ENCODE measurements at regions of chr2 and their contacts with region 1.

Region 1: GRCh38 chr2:219177552-219178376 is at the start of gene RETREG2:
- DNase-seq: peak; percentile 61 to 96 (median 78)
- ATAC-seq: peak; percentile 55
- H3K4me3 ChIP-seq: peak within 1 kb of the TSS; percentile 71 to 82
- H3K4me3 Mint-ChIP-seq: peak within 1 kb of the TSS; percentile 91
- H3K27ac ChIP-seq: peak within 1 kb of the TSS; percentile 97 to 98
- H3K27ac Mint-ChIP-seq: peak within 1 kb of the TSS; percentile 99
- H3K4me1 ChIP-seq: peaks cover 75% of the 10 kb centered on the region
- H3K4me1 Mint-ChIP-seq: peaks cover 75% of the 10 kb centered on the region
- H3K27me3 ChIP-seq: no peaks in the 10 kb centered on the region
- H3K27me3 Mint-ChIP-seq: no peaks in the 10 kb centered on the region
- CTCF ChIP-seq: no peak
- total RNA-seq, gene RETREG2: 76.7 to 79.0 TPM

Region 2: DNA sequence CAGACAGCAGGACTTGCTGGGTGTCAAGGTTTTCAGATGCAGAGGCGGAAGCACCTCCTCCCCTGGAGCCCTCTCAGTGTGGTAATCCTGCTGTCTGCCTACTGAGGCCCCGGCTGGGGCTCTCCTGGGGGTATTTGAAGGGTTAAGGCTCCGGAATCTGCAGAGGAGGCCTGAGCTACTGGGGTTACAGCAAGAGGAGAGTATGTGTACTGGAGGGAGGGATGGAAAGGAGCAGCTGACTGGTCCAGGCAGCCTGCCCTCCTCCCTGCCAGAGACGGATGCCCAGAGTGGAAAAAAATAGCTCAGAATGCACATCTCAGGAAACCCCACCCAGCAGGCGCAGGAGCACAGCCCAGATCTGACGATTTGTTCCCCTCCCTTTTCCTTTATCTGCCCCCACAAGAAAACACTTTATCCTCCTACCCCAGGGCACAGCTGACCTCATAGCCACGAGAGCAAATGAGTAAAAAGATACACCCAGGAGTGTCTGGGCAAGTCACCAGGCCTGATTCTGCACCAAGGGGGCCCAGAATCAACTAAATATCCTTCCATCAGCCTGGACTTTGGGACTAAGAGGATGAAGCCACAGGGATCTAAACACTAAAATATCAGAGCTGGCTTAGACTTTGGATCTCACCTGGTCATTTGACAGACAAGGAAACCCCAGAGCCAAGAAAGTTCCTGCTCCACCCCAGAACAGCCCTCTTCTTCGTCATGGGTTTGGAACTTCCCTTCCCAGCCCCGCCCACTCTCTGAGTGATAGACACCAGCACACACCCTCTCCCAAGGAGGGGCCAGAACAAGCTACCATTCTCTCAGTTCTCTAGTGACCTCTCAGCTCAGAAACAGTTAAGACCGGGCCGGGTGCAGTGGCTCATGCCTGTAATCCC is 890.9 kb before region 1 on chr2:
- CTCF ChIA-PET with region 1: no interaction called
- POLR2A ChIA-PET with region 1: no interaction called
- intact Hi-C with region 1: loop called in 1 of 2 experiments (anchors 2 kb)
- DNase-seq: peak; percentile 56 to 97 (median 80)
- ATAC-seq: peak; percentile 62
- H3K4me3 ChIP-seq: peak overlapping the region; percentile 51 to 60
- H3K4me3 Mint-ChIP-seq: peak overlapping the region; percentile 90
- H3K27ac ChIP-seq: peak overlapping the region; percentile 87 to 99
- H3K27ac Mint-ChIP-seq: peak overlapping the region; percentile 100
- H3K4me1 ChIP-seq: peaks cover 93% of the 10 kb centered on the region
- H3K4me1 Mint-ChIP-seq: peaks cover 78% of the 10 kb centered on the region
- H3K27me3 ChIP-seq: no peaks in the 10 kb centered on the region
- H3K27me3 Mint-ChIP-seq: no peaks in the 10 kb centered on the region
- CTCF ChIP-seq: no peak

Region 3: DNA sequence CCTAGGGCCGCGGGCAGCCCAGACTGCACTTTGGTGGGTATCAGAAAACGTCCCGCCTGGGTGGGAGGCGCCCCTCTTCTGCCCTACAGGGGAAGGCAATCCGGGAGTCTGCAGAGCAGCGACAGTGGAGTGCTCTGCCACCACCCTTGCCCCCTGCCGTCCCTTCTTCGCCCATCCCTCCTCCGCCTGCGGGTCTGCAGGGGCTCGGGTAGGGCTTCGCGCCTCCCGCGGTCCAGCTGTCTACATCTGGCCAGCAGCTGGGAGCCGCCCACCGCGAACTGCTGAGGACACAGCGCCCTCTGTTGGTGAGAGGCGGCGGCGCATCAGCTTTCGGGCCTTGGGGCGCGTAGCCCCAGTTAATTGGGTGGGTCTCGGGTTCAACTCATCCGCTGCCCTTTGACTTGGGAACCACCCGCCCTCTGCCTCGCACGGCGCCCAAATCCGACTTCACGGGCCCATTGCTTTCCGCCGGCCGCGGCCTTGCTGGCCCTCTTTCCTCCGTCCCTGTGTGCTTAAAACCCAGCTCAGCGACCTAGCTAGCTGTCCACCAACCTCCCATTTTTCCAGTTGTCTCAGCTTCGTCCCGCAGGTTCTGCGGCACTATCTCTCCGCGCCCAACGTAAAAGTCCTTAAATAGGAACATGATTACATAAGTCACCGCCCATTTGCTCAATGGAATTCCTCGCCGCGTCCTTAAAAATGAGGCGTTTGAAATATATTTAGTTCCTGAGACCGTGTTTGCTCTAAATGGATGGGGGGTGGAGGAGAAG is 279.5 kb before region 1 on chr2:
- CTCF ChIA-PET with region 1: no interaction called
- POLR2A ChIA-PET with region 1: no interaction called
- intact Hi-C with region 1: loop called in 1 of 2 experiments (anchors 5 kb)
- DNase-seq: peak; percentile 60 to 90 (median 81)
- ATAC-seq: peak; percentile 10
- H3K4me3 ChIP-seq: peak overlapping the region in 1 of 2 experiments; percentile 57
- H3K4me3 Mint-ChIP-seq: peak overlapping the region; percentile 80
- H3K27ac ChIP-seq: no peak overlapping the region
- H3K27ac Mint-ChIP-seq: no peak overlapping the region
- H3K4me1 ChIP-seq: peaks cover 54% of the 10 kb centered on the region
- H3K4me1 Mint-ChIP-seq: peaks cover 45% of the 10 kb centered on the region
- H3K27me3 ChIP-seq: peaks cover 7 to 33% of the 10 kb centered on the region in 2 experiments
- H3K27me3 Mint-ChIP-seq: peaks cover 30% of the 10 kb centered on the region
- CTCF ChIP-seq: peak; percentile 99

Region 4: GRCh38 chr2:219218732-219219701 is 41.3 kb after region 1 on chr2 and contains the start of gene ABCB6:
- CTCF ChIA-PET with region 1: interaction called, 215 read pairs
- POLR2A ChIA-PET with region 1: interaction called, 18 read pairs
- intact Hi-C with region 1: no loop called
- DNase-seq: peak; percentile 59 to 92 (median 87)
- ATAC-seq: peak; percentile 91
- H3K4me3 ChIP-seq: peak within 1 kb of the TSS; percentile 50 to 87
- H3K4me3 Mint-ChIP-seq: peak within 1 kb of the TSS; percentile 82
- H3K27ac ChIP-seq: peak within 1 kb of the TSS; percentile 43 to 47
- H3K27ac Mint-ChIP-seq: peak within 1 kb of the TSS; percentile 72
- H3K4me1 ChIP-seq: peaks cover 23% of the 10 kb centered on the region
- H3K4me1 Mint-ChIP-seq: peaks cover 19% of the 10 kb centered on the region
- H3K27me3 ChIP-seq: no peaks in the 10 kb centered on the region
- H3K27me3 Mint-ChIP-seq: no peaks in the 10 kb centered on the region
- CTCF ChIP-seq: no peak
- total RNA-seq, gene ABCB6: 3.4 to 3.5 TPM

Region 5: GRCh38 chr2:219253753-219254590 is 76.2 kb after region 1 on chr2 and contains the start of gene TUBA4A:
- CTCF ChIA-PET with region 1: interaction called, 4 read pairs
- POLR2A ChIA-PET with region 1: interaction called, 20 read pairs
- intact Hi-C with region 1: loop called in 1 of 2 experiments (anchors 2 kb)
- DNase-seq: peak; percentile 82 to 95 (median 91)
- ATAC-seq: peak; percentile 74
- H3K4me3 ChIP-seq: peak within 1 kb of the TSS; percentile 98 to 100
- H3K4me3 Mint-ChIP-seq: peak within 1 kb of the TSS; percentile 87
- H3K27ac ChIP-seq: peak within 1 kb of the TSS; percentile 81 to 93
- H3K27ac Mint-ChIP-seq: peak within 1 kb of the TSS; percentile 96
- H3K4me1 ChIP-seq: peaks cover 37% of the 10 kb centered on the region
- H3K4me1 Mint-ChIP-seq: peaks cover 46% of the 10 kb centered on the region
- H3K27me3 ChIP-seq: no peaks in the 10 kb centered on the region
- H3K27me3 Mint-ChIP-seq: no peaks in the 10 kb centered on the region
- CTCF ChIP-seq: no peak
- total RNA-seq, gene TUBA4A: 322 TPM

Region 6: GRCh38 chr2:219597552-219598307 is 420.0 kb after region 1 on chr2 and contains the start of gene STK11IP:
- CTCF ChIA-PET with region 1: no interaction called
- POLR2A ChIA-PET with region 1: no interaction called
- intact Hi-C with region 1: loop called in 1 of 2 experiments (anchors 5 kb)
- DNase-seq: peak; percentile 74 to 95 (median 90)
- ATAC-seq: peak; percentile 84
- H3K4me3 ChIP-seq: peak within 1 kb of the TSS; percentile 79 to 90
- H3K4me3 Mint-ChIP-seq: peak within 1 kb of the TSS; percentile 97
- H3K27ac ChIP-seq: peak within 1 kb of the TSS; percentile 77 to 83
- H3K27ac Mint-ChIP-seq: peak within 1 kb of the TSS; percentile 97
- H3K4me1 ChIP-seq: peaks cover 9% of the 10 kb centered on the region
- H3K4me1 Mint-ChIP-seq: peaks cover 27% of the 10 kb centered on the region
- H3K27me3 ChIP-seq: no peaks in the 10 kb centered on the region
- H3K27me3 Mint-ChIP-seq: no peaks in the 10 kb centered on the region
- CTCF ChIP-seq: no peak
- total RNA-seq, gene STK11IP: 29.7 to 31.5 TPM